ENCODE measurements at regions of chr12 and their contacts with region 1.

Region 1: GRCh38 chr12:104641862-104642261 is 185.1 kb downstream of the CHST11 start:
- DNase-seq: peak; percentile 86
- ATAC-seq: peak; percentile 79
- H3K4me3 ChIP-seq: no peak overlapping the region
- H3K4me3 Mint-ChIP-seq: peak overlapping the region; percentile 42
- H3K27ac ChIP-seq: peak overlapping the region; percentile 88 to 96
- H3K27ac Mint-ChIP-seq: peak overlapping the region; percentile 91
- H3K4me1 ChIP-seq: peaks cover 43 to 57% of the 10 kb centered on the region in 2 donors
- H3K4me1 Mint-ChIP-seq: peaks cover 84% of the 10 kb centered on the region
- H3K27me3 ChIP-seq: no peaks in the 10 kb centered on the region
- H3K27me3 Mint-ChIP-seq: no peaks in the 10 kb centered on the region
- CTCF ChIP-seq: peak; percentile 57

Region 2: DNA sequence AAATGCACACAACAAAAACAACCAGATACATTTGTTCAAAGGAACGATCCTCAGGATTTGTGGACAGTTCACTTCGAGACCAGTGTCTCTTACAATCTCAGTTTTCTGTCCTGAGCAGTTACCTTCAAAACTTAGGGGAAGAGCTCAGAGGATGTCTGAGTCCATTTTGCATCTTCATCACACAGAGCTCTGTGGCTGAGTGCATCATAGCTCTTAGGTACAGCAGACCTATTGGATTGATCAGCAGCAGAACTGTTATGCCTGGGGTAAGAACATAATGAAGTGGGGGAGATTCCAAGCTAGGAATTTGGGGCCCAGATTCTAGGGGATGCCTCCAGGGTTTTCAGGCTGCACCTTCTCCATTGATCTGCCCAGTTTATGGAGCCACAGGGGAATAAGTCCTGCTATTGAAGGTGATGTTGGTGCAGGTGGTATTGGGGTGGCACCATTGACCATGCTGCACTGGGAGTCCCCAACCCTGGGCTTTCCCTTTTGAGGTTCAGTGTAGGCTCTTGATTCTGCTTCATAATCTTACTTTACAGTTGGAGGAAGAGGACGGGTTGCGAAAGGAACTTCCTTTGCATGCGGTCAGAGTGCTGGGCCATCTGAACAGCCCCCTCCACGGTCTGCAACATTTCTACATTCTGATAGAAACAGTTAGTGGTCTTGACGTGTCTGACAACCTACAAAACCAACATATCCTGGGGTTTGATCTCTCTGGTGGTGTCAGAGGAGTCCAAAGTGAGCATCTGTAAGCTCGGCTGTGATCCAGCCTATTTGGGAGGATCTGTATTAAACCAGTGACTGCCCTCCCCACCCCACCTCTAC is 72.3 kb before region 1 on chr12:
- CTCF ChIA-PET with region 1: interaction called, 19 read pairs
- POLR2A ChIA-PET with region 1: interaction called, 3 read pairs
- intact Hi-C with region 1: loop called (anchors 1 kb)
- DNase-seq: peak; percentile 90
- ATAC-seq: peak; percentile 75
- H3K4me3 ChIP-seq: peak overlapping the region in 3 of 5 experiments; percentile 18 to 50 (median 21)
- H3K4me3 Mint-ChIP-seq: peak overlapping the region; percentile 79
- H3K27ac ChIP-seq: peak overlapping the region; percentile 70 to 87
- H3K27ac Mint-ChIP-seq: peak overlapping the region; percentile 82
- H3K4me1 ChIP-seq: peaks cover 37 to 55% of the 10 kb centered on the region in 2 donors
- H3K4me1 Mint-ChIP-seq: peaks cover 75% of the 10 kb centered on the region
- H3K27me3 ChIP-seq: no peaks in the 10 kb centered on the region
- H3K27me3 Mint-ChIP-seq: no peaks in the 10 kb centered on the region
- CTCF ChIP-seq: no peak

Region 3: DNA sequence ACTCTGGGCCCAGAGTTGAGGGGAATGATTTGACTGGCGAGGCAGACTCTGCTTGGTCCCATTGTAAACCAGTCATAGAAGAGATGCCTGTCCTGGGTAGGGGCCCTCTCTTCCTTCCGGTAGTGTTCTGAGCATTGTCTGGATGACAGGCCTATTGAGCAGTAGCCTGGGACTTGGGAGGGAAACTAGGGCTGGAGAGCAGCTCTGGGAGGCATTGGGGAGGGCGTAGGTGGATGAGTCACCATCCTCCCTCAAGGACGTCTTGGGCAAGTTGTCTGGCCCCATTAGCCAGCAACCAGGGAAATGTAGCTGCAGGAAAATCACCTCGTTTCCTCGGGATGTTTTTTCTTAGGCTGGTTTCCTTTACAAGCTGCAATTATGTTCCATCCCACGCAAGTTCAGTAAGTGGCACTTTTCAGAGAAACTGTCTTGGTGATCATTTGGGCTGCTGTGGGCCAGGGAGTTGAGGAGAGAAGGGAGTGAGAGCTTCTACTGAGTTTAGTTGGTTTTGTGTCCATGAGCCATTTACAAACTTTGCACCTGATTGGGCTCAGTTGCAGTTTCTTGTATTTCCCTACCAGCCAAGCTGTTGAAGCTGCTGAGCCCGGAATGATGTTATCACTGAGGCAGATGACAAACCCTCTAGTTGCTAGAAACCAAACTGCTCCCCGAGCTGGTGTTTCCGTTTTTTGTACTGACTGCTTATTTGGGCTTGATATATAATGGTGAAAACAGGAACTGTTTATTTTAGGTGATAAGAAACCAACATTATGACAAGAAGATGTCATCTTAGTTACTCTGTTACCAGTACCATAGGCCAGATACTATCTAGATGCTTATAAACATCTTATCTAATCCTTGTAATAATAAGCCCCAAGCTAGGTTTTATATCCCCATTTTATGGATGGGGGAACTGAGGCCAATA is 37.5 kb before region 1 on chr12:
- CTCF ChIA-PET with region 1: interaction called, 3 read pairs
- POLR2A ChIA-PET with region 1: no interaction called
- intact Hi-C with region 1: loop called (anchors 2 kb)
- DNase-seq: peak; percentile 82
- ATAC-seq: peak; percentile 89
- H3K4me3 ChIP-seq: peak overlapping the region in 1 of 5 experiments; percentile 21
- H3K4me3 Mint-ChIP-seq: peak overlapping the region; percentile 58
- H3K27ac ChIP-seq: peak overlapping the region; percentile 60 to 73
- H3K27ac Mint-ChIP-seq: peak overlapping the region; percentile 69
- H3K4me1 ChIP-seq: peaks cover 37 to 44% of the 10 kb centered on the region in 2 donors
- H3K4me1 Mint-ChIP-seq: peaks cover 64% of the 10 kb centered on the region
- H3K27me3 ChIP-seq: no peaks in the 10 kb centered on the region
- H3K27me3 Mint-ChIP-seq: no peaks in the 10 kb centered on the region
- CTCF ChIP-seq: no peak

Region 4: GRCh38 chr12:104720339-104721038 is 78.6 kb after region 1 on chr12:
- CTCF ChIA-PET with region 1: interaction called, 4 read pairs
- POLR2A ChIA-PET with region 1: no interaction called
- intact Hi-C with region 1: loop called (anchors 2 kb)
- DNase-seq: peak; percentile 79
- ATAC-seq: peak; percentile 64
- H3K4me3 ChIP-seq: peak overlapping the region; percentile 20 to 52 (median 47)
- H3K4me3 Mint-ChIP-seq: peak overlapping the region; percentile 86
- H3K27ac ChIP-seq: peak overlapping the region; percentile 54 to 73
- H3K27ac Mint-ChIP-seq: peak overlapping the region; percentile 87
- H3K4me1 ChIP-seq: peaks cover 32 to 49% of the 10 kb centered on the region in 2 donors
- H3K4me1 Mint-ChIP-seq: peaks cover 64% of the 10 kb centered on the region
- H3K27me3 ChIP-seq: no peaks in the 10 kb centered on the region
- H3K27me3 Mint-ChIP-seq: no peaks in the 10 kb centered on the region
- CTCF ChIP-seq: no peak

Region 5: GRCh38 chr12:104958009-104958945 is 316.4 kb after region 1 on chr12 and contains the start of gene SLC41A2:
- CTCF ChIA-PET with region 1: no interaction called
- POLR2A ChIA-PET with region 1: no interaction called
- intact Hi-C with region 1: loop called (anchors 10 kb)
- DNase-seq: peak; percentile 91
- ATAC-seq: peak; percentile 84
- H3K4me3 ChIP-seq: peak within 1 kb of the TSS; percentile 57 to 80 (median 75)
- H3K4me3 Mint-ChIP-seq: peak within 1 kb of the TSS; percentile 95
- H3K27ac ChIP-seq: peak within 1 kb of the TSS; percentile 79 to 80
- H3K27ac Mint-ChIP-seq: peak within 1 kb of the TSS; percentile 93
- H3K4me1 ChIP-seq: peaks cover 13 to 16% of the 10 kb centered on the region in 2 donors
- H3K4me1 Mint-ChIP-seq: peaks cover 23% of the 10 kb centered on the region
- H3K27me3 ChIP-seq: peaks cover 0 to 2% (median 0%) of the 10 kb centered on the region in 4 experiments
- H3K27me3 Mint-ChIP-seq: peaks cover 6% of the 10 kb centered on the region
- CTCF ChIP-seq: peak; percentile 48
- total RNA-seq, gene SLC41A2: 13.0 TPM in 2 replicates

Measured in B cell (primary cell).